CD4-positive, alpha-beta T cell (primary cell): ENCODE measurements at regions of chr11 and their contacts with region 1.

Region 1: DNA sequence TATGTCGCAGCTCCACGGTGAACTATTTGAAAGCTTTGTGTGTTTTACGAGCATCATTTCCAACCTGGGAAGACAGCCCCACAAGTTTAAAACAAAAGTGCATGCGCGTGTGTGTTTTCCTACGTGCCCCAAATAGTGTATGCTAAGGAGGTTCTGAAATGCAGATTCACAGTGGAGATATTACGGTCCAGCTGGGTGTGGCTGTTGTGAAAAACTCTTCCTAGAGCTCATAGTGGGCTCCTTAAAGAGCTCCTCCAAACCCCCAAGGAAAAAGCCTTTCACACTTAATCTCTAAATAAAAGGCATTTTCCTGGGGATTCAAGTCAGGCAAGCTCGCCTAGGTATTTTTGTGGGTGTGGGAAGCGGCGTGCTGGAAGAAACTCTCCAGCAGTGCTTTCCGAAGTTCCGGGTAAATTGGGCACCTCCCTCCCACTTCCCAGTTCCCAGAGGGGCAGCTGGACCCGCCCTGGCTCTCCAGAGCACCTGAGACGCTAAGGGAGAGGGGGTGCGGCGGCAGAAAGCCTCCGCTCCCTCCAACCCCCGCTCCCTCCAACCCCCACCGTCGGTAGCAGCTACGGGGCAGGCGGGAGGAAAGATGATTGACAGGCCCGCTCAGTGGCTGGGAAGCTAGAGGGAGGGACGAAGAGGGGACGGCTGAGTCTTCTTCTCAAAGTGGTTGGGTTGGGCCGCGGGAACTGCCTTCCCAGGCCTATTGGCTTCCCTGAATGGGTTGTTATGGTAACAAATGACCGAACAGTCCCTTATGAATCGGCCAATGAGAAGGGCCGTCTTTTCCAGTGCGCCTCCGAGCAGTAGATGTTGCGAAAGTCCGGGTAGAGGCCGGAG is 558 bp upstream of the PCF11 start:
- DNase-seq: peak in 13 of 14 experiments; percentile 47 to 100 (median 97)
- ATAC-seq: peak; percentile 84
- H3K4me3 ChIP-seq: peak overlapping the region; percentile 99
- H3K4me3 Mint-ChIP-seq: peak overlapping the region; percentile 98
- H3K27ac ChIP-seq: peak overlapping the region; percentile 98 to 99
- H3K27ac Mint-ChIP-seq: peak overlapping the region; percentile 100
- H3K4me1 ChIP-seq: peaks cover 16% of the 10 kb centered on the region
- H3K4me1 Mint-ChIP-seq: peaks cover 26% of the 10 kb centered on the region
- H3K27me3 ChIP-seq: no peaks in the 10 kb centered on the region
- H3K27me3 Mint-ChIP-seq: no peaks in the 10 kb centered on the region
- CTCF ChIP-seq: no peak

Region 2: DNA sequence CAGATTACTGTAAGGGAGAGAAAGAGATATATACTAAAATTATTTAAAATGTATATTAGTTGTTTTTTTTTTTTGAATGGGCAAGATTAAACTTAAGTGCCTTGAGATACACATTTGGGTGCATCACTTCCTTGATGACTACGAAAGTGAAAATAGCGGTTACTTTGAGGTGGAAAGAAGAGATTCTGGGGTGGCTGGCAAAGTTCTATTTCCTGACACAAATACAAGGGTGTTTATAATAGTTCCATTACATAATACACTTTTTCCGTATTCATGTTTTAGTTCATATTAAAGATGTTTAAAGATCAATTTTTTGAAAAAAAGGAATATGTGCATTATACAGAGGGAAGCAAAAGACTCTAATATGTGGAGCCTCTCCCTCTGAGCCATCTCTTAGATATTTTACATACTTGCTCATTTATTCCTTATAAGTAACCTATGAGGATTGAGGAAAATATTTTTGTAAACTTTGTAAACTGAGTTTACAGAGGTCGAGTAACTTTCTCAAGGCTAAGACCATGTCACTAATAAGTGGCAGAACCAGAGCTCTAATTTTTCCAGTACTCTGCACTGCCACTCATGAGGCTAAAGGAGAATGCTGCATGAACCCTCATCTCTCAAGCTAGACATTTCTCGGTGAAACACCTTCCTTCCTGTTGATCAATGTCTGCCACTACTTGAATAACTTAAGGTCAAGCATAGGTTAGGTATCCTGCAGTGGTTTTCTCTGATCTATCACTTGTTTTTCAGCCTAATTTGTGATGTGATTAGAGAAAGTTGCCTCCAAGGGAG is 196.2 kb before region 1 on chr11:
- CTCF ChIA-PET with region 1: interaction called, 3 read pairs
- POLR2A ChIA-PET with region 1: interaction called, 50 read pairs
- intact Hi-C with region 1: no loop called
- DNase-seq: peak in 10 of 14 experiments; percentile 12 to 92 (median 46)
- ATAC-seq: peak; percentile 85
- H3K4me3 ChIP-seq: peak overlapping the region; percentile 37
- H3K4me3 Mint-ChIP-seq: peak overlapping the region; percentile 69
- H3K27ac ChIP-seq: peak overlapping the region; percentile 76 to 81
- H3K27ac Mint-ChIP-seq: peak overlapping the region; percentile 97
- H3K4me1 ChIP-seq: peaks cover 45% of the 10 kb centered on the region
- H3K4me1 Mint-ChIP-seq: peaks cover 88% of the 10 kb centered on the region
- H3K27me3 ChIP-seq: no peaks in the 10 kb centered on the region
- H3K27me3 Mint-ChIP-seq: no peaks in the 10 kb centered on the region
- CTCF ChIP-seq: no peak

Region 3: DNA sequence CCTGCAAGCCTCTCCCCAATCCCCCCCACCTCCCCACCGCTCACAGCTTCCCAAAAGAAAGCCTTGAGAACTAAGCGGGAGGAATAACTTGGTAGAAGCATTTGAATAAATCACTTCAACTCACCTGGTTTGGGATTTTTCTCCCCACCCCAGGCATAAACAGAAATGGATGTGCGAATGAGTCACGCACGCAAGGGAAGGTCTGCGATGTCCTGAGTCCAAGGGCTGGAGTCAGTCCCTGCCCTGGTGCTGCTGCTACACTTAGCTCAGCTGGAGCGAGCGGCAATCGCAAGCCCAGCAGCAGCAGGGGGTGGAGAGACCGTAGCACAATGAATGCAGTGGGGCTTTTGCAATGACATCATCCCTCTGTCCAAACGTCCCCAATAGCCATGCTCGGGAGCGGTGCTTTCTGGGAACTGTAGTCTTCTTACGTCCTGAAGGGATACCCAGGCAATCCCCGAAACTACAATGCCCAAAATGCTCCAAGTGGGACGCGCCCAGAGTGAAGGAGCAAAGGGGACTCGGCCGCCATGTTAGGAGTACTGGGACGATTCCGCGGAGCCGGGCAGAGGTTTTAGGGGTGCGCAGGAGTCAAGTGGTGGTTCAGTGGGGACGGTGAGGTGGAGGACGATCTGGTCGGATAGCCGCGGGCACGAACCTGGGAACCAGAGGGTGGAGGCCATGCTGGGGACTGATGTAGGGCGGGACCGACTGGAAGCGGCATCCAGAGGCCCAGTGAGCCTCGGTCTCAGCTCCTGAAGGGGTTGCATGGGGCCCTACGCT is 84.6 kb before region 1 on chr11 and contains the start of gene RAB30:
- CTCF ChIA-PET with region 1: interaction called, 3 read pairs
- POLR2A ChIA-PET with region 1: interaction called, 186 read pairs
- intact Hi-C with region 1: loop called (anchors 1 kb)
- DNase-seq: peak; percentile 84 to 99 (median 89)
- ATAC-seq: peak; percentile 91
- H3K4me3 ChIP-seq: peak within 1 kb of the TSS; percentile 68
- H3K4me3 Mint-ChIP-seq: no peak within 1 kb of the TSS
- H3K27ac ChIP-seq: peak within 1 kb of the TSS; percentile 78 to 91
- H3K27ac Mint-ChIP-seq: no peak within 1 kb of the TSS
- H3K4me1 ChIP-seq: peaks cover 35% of the 10 kb centered on the region
- H3K4me1 Mint-ChIP-seq: no peaks in the 10 kb centered on the region
- H3K27me3 ChIP-seq: no peaks in the 10 kb centered on the region
- H3K27me3 Mint-ChIP-seq: no peaks in the 10 kb centered on the region
- CTCF ChIP-seq: no peak
- total RNA-seq, gene RAB30: 76.2 to 79.2 TPM

Region 4: GRCh38 chr11:83124636-83125424 is 31.5 kb before region 1 on chr11:
- CTCF ChIA-PET with region 1: no interaction called
- POLR2A ChIA-PET with region 1: interaction called, 59 read pairs
- intact Hi-C with region 1: no loop called
- DNase-seq: no peak
- ATAC-seq: no peak
- H3K4me3 ChIP-seq: no peak overlapping the region
- H3K4me3 Mint-ChIP-seq: no peak overlapping the region
- H3K27ac ChIP-seq: no peak overlapping the region
- H3K27ac Mint-ChIP-seq: no peak overlapping the region
- H3K4me1 ChIP-seq: peaks cover 18% of the 10 kb centered on the region
- H3K4me1 Mint-ChIP-seq: peaks cover 30% of the 10 kb centered on the region
- H3K27me3 ChIP-seq: no peaks in the 10 kb centered on the region
- H3K27me3 Mint-ChIP-seq: no peaks in the 10 kb centered on the region
- CTCF ChIP-seq: no peak

Region 5: DNA sequence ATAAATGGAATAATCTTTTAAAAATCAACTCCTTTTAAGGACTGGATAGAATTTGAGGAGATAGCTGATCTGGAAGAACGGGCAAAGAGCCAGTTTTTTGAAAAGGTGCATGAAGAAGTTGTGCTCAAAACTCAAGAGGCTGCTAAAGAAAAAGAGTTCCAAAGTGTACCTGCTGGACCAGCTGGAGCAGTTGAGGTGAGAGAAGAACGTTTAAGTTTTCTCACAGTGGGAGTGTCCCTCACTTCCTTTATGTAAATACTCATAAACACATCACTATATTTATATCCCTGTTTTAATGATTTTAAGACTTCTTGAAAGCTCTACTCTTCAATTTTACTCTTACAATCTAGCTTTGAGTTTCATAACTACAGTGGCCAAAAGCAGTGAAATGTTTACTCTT is 25.4 kb after region 1 on chr11:
- CTCF ChIA-PET with region 1: interaction called, 3 read pairs
- POLR2A ChIA-PET with region 1: interaction called, 29 read pairs
- intact Hi-C with region 1: loop called in 1 of 2 experiments (anchors 2 kb)
- DNase-seq: no peak
- ATAC-seq: no peak
- H3K4me3 ChIP-seq: no peak overlapping the region
- H3K4me3 Mint-ChIP-seq: no peak overlapping the region
- H3K27ac ChIP-seq: peak overlapping the region in 1 of 2 donors; percentile 10
- H3K27ac Mint-ChIP-seq: peak overlapping the region; percentile 64
- H3K4me1 ChIP-seq: peaks cover 4% of the 10 kb centered on the region
- H3K4me1 Mint-ChIP-seq: peaks cover 30% of the 10 kb centered on the region
- H3K27me3 ChIP-seq: no peaks in the 10 kb centered on the region
- H3K27me3 Mint-ChIP-seq: no peaks in the 10 kb centered on the region
- CTCF ChIP-seq: no peak

Region 6: DNA sequence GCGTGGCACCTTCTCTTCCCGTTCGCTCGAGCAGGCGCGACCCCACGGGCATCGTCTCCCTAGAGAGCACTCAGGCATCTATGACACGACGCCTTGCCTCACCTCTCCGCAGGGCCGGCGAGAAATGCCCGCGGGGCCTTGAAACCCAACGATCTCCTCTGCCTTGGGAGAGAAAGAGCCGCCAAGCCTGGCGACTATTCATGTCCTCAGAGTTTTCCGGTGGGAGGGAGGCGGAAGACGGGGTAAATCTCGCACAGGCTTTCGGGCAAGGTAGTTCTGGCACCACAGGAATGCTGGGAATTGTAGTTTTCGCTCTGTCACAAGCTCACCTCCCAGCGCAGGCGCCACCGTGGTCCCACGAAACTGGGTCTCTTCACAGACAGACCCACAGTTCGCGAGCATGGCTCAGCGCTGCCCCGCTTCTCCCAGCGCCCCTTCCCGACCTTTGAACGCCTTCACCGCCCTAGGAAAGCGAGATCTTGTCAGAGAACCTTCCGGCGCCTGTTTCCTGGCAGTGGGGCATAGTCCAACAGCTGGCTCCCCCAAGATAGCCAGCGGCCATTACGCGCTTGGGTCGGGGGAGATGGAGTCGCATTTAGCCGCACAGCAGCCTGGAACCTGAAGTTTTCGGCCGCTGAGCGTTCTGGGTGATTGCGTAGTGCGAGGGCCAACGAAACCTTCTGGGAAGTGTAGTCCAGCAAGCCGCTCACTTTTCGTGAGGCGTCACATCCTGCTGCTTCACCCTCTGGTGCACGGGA is 129.6 kb after region 1 on chr11 and contains the start of gene CCDC90B:
- CTCF ChIA-PET with region 1: no interaction called
- POLR2A ChIA-PET with region 1: interaction called, 38 read pairs
- intact Hi-C with region 1: loop called (anchors 1 to 5 kb)
- DNase-seq: peak; percentile 88 to 98 (median 90)
- ATAC-seq: peak; percentile 90
- H3K4me3 ChIP-seq: peak within 1 kb of the TSS; percentile 92
- H3K4me3 Mint-ChIP-seq: peak within 1 kb of the TSS; percentile 97
- H3K27ac ChIP-seq: peak within 1 kb of the TSS; percentile 95 to 99
- H3K27ac Mint-ChIP-seq: peak within 1 kb of the TSS; percentile 100
- H3K4me1 ChIP-seq: peaks cover 13% of the 10 kb centered on the region
- H3K4me1 Mint-ChIP-seq: peaks cover 52% of the 10 kb centered on the region
- H3K27me3 ChIP-seq: no peaks in the 10 kb centered on the region
- H3K27me3 Mint-ChIP-seq: no peaks in the 10 kb centered on the region
- CTCF ChIP-seq: no peak
- total RNA-seq, gene CCDC90B: 23.5 to 25.7 TPM

Region 7: GRCh38 chr11:83502041-83502440 is 345.7 kb after region 1 on chr11:
- CTCF ChIA-PET with region 1: no interaction called
- POLR2A ChIA-PET with region 1: no interaction called
- intact Hi-C with region 1: no loop called
- DNase-seq: no peak
- ATAC-seq: no peak
- H3K4me3 ChIP-seq: no peak overlapping the region
- H3K4me3 Mint-ChIP-seq: no peak overlapping the region
- H3K27ac ChIP-seq: no peak overlapping the region
- H3K27ac Mint-ChIP-seq: no peak overlapping the region
- H3K4me1 ChIP-seq: no peaks in the 10 kb centered on the region
- H3K4me1 Mint-ChIP-seq: no peaks in the 10 kb centered on the region
- H3K27me3 ChIP-seq: no peaks in the 10 kb centered on the region
- H3K27me3 Mint-ChIP-seq: no peaks in the 10 kb centered on the region
- CTCF ChIP-seq: no peak